ENCODE measurements at regions of chrX and their contacts with region 1.

Region 1: DNA sequence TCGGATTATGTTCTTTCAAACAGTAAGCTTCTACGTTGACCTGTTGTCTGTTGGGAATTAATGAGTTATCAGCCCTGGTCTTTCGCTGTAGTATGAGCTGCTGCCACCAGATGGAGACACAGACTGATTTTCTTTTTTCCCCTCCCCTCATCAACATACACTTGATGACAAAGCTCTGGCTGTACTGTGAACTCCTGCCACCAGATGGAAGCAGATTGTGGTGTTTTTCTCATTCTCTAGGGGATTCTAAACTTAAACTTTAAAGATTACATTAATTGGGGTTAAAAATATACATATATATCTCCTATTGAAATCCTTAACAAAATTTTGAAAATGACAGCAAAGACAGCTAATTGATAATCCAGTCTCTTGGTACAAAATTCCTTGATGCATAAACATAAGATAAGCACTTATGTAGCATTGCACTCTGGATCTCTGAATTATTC is 44.8 kb downstream of the SMS start:
- DNase-seq: peak; percentile 69
- H3K4me3 ChIP-seq: no peak overlapping the region
- H3K27ac ChIP-seq: no peak overlapping the region
- H3K4me1 ChIP-seq: peaks cover 4% of the 10 kb centered on the region
- H3K27me3 ChIP-seq: no peaks in the 10 kb centered on the region
- CTCF ChIP-seq: peak; percentile 91 to 99

Region 2: GRCh38 chrX:21996872-21997271 is 11.5 kb after region 1 on chrX:
- CTCF ChIA-PET with region 1: no interaction called
- dilution Hi-C with region 1: no loop called
- in situ Hi-C with region 1: no loop called
- intact Hi-C with region 1: no loop called
- DNase-seq: peak; percentile 29
- H3K4me3 ChIP-seq: no peak overlapping the region
- H3K27ac ChIP-seq: no peak overlapping the region
- H3K4me1 ChIP-seq: peaks cover 3% of the 10 kb centered on the region
- H3K27me3 ChIP-seq: no peaks in the 10 kb centered on the region
- CTCF ChIP-seq: no peak

Region 3: DNA sequence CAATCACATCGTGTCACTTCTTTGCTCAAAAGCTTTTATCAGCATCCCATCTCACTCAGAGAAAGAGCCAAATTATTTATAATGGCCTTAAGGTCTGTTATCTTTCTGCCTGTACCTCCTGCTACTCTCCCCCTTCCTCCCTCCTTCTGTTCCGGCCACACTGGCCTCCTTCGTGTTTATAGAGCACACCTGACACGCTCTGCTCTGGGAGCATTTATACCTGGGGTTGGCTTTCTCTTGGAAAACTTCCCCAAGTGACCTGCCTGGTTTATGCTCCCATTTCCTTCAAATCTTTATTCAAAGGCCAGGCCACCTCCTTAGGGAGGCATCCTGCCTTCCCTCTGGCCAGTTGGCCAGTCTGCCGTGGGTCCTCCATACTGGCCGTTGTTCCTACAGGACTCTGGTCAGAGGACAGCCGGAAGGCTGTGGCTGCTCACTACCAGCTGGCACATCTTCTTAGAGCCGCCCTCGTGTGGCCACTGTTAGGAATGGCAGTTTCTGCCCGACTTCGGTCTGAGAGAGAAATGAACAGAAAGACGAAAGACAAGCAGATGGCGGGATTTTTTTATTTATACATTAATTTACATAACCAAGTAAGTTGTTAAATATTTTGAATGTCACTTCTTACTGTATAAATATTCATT is 207.2 kb after region 1 on chrX:
- CTCF ChIA-PET with region 1: no interaction called
- dilution Hi-C with region 1: no loop called
- in situ Hi-C with region 1: no loop called
- intact Hi-C with region 1: loop called (anchors 1 kb)
- DNase-seq: peak; percentile 41
- H3K4me3 ChIP-seq: no peak overlapping the region
- H3K27ac ChIP-seq: no peak overlapping the region
- H3K4me1 ChIP-seq: peaks cover 2% of the 10 kb centered on the region
- H3K27me3 ChIP-seq: no peaks in the 10 kb centered on the region
- CTCF ChIP-seq: peak; percentile 70 to 82

Region 4: GRCh38 chrX:22758807-22759481 is 773.6 kb after region 1 on chrX:
- CTCF ChIA-PET with region 1: no interaction called
- dilution Hi-C with region 1: no loop called
- in situ Hi-C with region 1: loop called in 1 of 2 experiments (anchors 25 kb)
- intact Hi-C with region 1: no loop called
- DNase-seq: no peak
- H3K4me3 ChIP-seq: no peak overlapping the region
- H3K27ac ChIP-seq: no peak overlapping the region
- H3K4me1 ChIP-seq: no peaks in the 10 kb centered on the region
- H3K27me3 ChIP-seq: no peaks in the 10 kb centered on the region
- CTCF ChIP-seq: no peak

Region 5: DNA sequence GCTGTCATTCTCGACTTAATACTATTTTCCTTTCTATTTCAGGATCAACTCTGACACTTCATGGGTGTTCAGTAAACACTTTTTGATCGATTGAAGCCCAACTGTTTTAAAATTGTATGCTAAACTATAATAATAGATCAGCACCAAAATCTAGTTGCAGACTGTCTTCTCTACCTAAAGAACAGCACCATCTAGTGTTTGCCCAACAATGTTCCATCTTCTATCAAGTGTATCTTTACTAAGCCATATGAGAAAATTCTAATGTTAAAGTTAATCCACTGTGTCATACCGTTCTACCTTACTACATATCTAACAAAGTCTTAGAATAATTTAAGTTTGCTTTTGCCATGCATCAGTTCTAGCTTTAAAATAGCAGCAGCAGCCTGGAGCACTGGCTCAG is 1568.9 kb after region 1 on chrX:
- CTCF ChIA-PET with region 1: no interaction called
- dilution Hi-C with region 1: no loop called
- in situ Hi-C with region 1: no loop called
- intact Hi-C with region 1: loop called (anchors 5 kb)
- DNase-seq: peak; percentile 20
- H3K4me3 ChIP-seq: no peak overlapping the region
- H3K27ac ChIP-seq: no peak overlapping the region
- H3K4me1 ChIP-seq: no peaks in the 10 kb centered on the region
- H3K27me3 ChIP-seq: peaks cover 4% of the 10 kb centered on the region
- CTCF ChIP-seq: peak; percentile 68 to 72

Region 6: DNA sequence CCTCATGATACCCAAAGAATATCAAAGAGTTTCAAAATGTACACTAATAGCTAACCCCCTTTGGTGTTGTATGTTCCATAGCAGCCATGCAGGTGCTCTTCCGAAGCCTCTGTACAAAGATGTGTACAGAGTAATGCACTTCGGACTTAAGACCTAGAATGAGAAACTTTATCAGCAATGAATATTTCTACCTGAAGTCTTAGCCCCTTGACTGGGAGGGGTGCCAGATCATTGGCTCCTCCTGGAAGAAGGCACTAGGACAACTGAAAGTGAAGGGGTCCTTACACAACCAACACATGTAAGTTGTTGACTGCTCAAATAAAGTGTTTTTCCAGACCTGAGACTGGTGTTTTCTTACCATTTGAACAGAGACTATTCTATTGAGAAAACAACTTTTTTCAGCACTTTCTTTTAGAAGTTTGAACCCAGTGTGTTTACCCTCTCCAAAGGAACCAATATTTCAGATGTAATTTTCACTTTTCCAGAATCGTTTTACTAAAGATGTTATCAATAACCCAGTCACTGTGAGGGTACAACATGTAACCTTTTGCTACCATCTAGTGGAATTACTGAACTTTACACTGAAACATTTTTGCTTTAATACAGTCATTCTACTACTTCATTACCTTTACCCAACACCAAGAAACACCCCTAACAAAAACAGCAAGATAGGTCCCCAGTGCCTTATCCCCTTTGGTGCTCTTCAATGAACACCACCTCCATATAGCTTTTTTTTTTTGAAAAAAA is 1648.7 kb after region 1 on chrX:
- CTCF ChIA-PET with region 1: no interaction called
- dilution Hi-C with region 1: no loop called
- in situ Hi-C with region 1: loop called in 1 of 2 experiments (anchors 25 kb)
- intact Hi-C with region 1: no loop called
- DNase-seq: peak; percentile 5
- H3K4me3 ChIP-seq: no peak overlapping the region
- H3K27ac ChIP-seq: no peak overlapping the region
- H3K4me1 ChIP-seq: no peaks in the 10 kb centered on the region
- H3K27me3 ChIP-seq: no peaks in the 10 kb centered on the region
- CTCF ChIP-seq: peak in 1 of 2 donors; percentile 27

Measured in mammary epithelial cell (primary cell).